Pancreas (tissue), 10 donors: ENCODE measurements at regions of chr10 and their contacts with region 1.

Region 1: GRCh38 chr10:113565364-113565763 is 12.5 kb downstream of the HABP2 start:
- DNase-seq: no peak
- ATAC-seq: no peak
- H3K4me3 ChIP-seq: no peak overlapping the region
- H3K27ac ChIP-seq: no peak overlapping the region
- H3K4me1 ChIP-seq: peaks cover 0 to 9% (median 0%) of the 10 kb centered on the region in 3 donors
- H3K27me3 ChIP-seq: no peaks in the 10 kb centered on the region
- CTCF ChIP-seq: no peak

Region 2: DNA sequence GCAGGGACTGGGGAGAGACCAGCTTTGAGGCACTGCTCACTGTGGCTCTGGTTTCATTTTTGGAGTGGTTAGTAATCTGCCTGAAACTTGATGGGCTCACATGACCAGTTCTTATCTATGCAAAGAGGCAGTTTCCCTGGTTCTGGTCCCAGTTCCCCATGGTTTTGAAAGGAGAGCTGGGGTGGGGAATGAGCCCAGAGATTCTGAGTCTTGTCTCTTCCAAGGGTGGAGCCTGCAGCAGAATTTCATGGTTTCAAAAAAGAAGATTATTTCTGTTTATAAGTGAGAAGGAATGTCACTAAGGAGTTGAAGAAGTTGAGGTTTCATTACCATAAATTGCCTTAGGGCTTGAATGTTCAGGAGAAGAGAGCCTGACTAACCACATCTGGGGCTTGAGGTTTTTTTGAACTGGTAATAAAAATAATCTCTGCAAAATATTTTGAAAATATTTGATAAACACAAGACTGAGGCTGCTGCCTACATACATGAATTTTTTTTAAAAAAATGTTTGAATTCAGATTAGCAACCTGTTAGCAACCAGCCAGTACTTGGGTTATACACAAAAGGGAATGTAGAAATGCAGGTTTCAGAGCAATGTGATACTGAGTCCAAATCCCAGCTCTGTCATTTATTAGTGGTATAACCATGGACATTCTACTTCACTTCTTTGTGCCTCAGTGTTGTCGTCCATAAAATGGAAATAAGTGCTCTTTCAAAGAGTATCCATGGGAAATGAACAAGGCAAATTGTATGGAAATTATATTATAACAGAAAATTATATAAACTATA is 202.5 kb before region 1 on chr10:
- intact Hi-C with region 1: no loop called
- DNase-seq: no peak
- ATAC-seq: peak in 3 of 4 donors; percentile 37 to 57 (median 44)
- H3K4me3 ChIP-seq: no peak overlapping the region
- H3K27ac ChIP-seq: no peak overlapping the region
- H3K4me1 ChIP-seq: no peaks in the 10 kb centered on the region
- H3K27me3 ChIP-seq: no peaks in the 10 kb centered on the region
- CTCF ChIP-seq: no peak

Region 3: DNA sequence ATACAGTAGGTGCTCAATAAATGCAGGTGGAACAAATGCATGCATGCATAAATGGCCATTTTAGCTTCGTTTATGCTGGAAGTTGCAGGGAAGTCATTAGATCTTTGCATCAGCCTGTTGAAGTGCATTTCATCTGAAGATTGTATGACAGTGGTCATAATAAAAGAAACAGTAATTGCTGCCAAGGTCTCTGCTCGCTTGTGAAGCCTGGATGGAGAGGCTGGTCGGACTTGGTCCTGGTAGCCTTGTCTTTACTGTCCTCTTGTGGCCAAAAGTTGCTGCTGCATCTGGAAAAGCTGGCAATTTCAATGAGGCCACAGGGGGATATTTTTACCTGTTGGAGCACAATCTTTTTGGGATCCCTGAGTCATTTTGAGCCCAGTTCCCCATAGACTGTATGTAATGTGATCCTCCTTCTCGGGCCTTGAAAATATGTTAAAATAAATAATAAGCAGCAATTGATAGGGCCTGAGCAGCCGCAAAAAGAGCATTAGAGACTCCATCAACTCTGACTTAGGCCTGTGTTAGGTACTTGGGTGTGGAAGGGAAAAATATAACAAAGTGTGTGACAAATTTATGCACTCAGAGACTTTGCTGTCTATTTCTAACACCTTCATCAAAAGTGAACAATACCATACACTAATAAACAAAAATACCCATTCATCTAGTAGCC is 44.1 kb before region 1 on chr10:
- intact Hi-C with region 1: loop called in 1 of 3 experiments (anchors 5 kb)
- DNase-seq: peak in 5 of 6 donors; percentile 56 to 84 (median 68)
- ATAC-seq: peak; percentile 86 to 96 (median 93)
- H3K4me3 ChIP-seq: no peak overlapping the region
- H3K27ac ChIP-seq: no peak overlapping the region
- H3K4me1 ChIP-seq: peaks cover 0 to 4% (median 0%) of the 10 kb centered on the region in 3 donors
- H3K27me3 ChIP-seq: no peaks in the 10 kb centered on the region
- CTCF ChIP-seq: peak; percentile 86 to 94 (median 93)

Region 4: GRCh38 chr10:113753020-113753692 is 187.8 kb after region 1 on chr10:
- intact Hi-C with region 1: no loop called
- DNase-seq: no peak
- ATAC-seq: peak in 3 of 4 donors; percentile 27 to 64 (median 45)
- H3K4me3 ChIP-seq: peak overlapping the region in 2 of 4 donors; percentile 12 to 27
- H3K27ac ChIP-seq: peak overlapping the region in 2 of 4 donors; percentile 64 to 74
- H3K4me1 ChIP-seq: peaks cover 0 to 4% (median 0%) of the 10 kb centered on the region in 3 donors
- H3K27me3 ChIP-seq: no peaks in the 10 kb centered on the region
- CTCF ChIP-seq: no peak